ENCODE measurements at regions of chr11 and their contacts with region 1.

Region 1: GRCh38 chr11:95231127-95231880 is at the start of gene SESN3:
- DNase-seq: peak; percentile 96 to 99
- H3K4me3 ChIP-seq: peak within 1 kb of the TSS; percentile 70 to 94
- H3K27ac ChIP-seq: peak within 1 kb of the TSS; percentile 85 to 87
- H3K4me1 ChIP-seq: peaks cover 0 to 14% of the 10 kb centered on the region in 2 donors
- H3K27me3 ChIP-seq: no peaks in the 10 kb centered on the region
- CTCF ChIP-seq: peak in 1 of 3 experiments; percentile 17
- total RNA-seq, gene SESN3: 15.1 TPM

Region 2: GRCh38 chr11:95067039-95067840 is 164.1 kb before region 1 on chr11:
- intact Hi-C with region 1: loop called (anchors 5 kb)
- DNase-seq: peak in 1 of 2 donors; percentile 93
- H3K4me3 ChIP-seq: peak overlapping the region; percentile 88 to 95
- H3K27ac ChIP-seq: peak overlapping the region; percentile 98 to 99
- H3K4me1 ChIP-seq: peaks cover 0 to 14% of the 10 kb centered on the region in 2 donors
- H3K27me3 ChIP-seq: no peaks in the 10 kb centered on the region
- CTCF ChIP-seq: peak; percentile 71 to 78 (median 73)

Region 3: DNA sequence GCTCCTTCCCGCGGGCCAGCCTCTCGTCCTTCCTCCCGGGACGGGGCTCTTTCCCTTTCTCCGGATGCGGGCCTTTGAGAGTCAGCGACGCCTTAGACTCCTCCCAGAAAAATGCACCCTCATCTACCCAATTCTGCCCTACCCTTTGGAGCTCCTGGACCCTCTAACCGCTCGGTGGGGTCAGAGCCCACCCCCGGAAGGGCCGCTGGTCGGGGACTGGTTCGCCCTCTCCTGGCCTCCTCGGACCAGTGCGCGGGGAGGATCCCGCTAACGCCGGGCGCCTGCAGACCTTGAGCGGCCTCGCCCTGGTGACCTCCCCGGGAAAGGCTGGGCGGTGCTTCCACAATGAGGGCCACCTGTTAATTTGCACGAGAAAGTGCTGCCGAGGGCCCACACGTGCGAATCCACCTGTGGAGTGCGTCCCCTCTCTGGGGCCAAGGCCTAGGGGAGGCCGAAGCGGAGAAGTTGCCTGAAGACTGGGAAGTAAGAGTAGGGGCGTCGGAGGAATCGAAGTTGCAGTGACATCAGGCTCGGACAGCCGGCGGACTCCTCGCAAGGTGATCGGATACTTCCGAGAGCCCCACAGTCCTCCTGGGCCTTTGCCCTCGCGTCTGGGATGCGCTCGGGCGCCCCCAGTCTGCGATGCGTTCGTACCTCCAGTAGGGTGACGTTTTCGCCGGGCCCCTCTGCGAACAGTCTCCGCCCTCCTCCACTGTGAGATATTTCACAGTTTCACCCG is 80.2 kb before region 1 on chr11:
- intact Hi-C with region 1: loop called (anchors 2 kb)
- DNase-seq: peak; percentile 60 to 96
- H3K4me3 ChIP-seq: peak overlapping the region; percentile 76 to 88
- H3K27ac ChIP-seq: peak overlapping the region; percentile 89 to 94
- H3K4me1 ChIP-seq: peaks cover 0 to 15% of the 10 kb centered on the region in 2 donors
- H3K27me3 ChIP-seq: no peaks in the 10 kb centered on the region
- CTCF ChIP-seq: peak; percentile 71 to 95 (median 83)

Region 4: DNA sequence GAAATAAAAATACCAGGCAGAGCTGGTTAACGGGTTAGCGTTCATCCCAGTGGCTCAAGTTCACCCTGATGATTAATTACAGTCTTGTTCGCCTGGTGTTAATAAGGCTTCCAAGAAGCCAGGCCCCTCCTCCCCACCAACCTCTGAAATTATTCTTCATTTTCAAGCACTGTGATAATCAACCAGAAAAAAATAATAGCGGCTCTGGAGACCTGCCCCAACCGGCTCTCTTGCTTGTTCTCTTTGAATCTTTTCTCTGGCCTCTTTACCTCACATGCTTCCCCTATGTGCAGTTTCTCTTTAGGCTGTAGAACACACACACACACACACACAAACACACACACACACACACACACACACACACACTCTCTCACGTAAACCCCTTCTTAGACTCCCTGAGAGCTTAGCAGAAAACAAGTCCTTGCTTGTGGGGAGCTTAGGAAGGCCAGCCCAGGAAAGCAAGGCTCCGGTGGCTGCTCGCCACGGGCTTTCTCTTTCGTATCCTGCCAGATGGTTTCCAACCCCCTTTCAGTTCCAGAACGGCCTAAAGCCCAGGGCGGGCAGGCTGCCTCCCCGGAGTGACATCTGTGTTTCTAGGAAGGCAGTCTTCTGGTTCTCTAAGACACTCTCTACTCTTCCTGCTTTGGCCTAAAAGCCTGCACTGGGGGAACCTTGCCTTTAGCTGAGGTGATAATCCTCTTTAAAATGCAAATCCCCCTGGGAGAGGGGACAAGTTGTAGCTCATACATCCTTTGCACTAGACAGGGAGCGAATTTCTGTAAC is 106.1 kb after region 1 on chr11:
- intact Hi-C with region 1: loop called (anchors 5 kb)
- DNase-seq: peak in 1 of 2 donors; percentile 71
- H3K4me3 ChIP-seq: peak overlapping the region in 1 of 2 donors; percentile 46
- H3K27ac ChIP-seq: peak overlapping the region; percentile 77 to 88
- H3K4me1 ChIP-seq: peaks cover 7 to 28% of the 10 kb centered on the region in 2 donors
- H3K27me3 ChIP-seq: no peaks in the 10 kb centered on the region
- CTCF ChIP-seq: no peak

Region 5: DNA sequence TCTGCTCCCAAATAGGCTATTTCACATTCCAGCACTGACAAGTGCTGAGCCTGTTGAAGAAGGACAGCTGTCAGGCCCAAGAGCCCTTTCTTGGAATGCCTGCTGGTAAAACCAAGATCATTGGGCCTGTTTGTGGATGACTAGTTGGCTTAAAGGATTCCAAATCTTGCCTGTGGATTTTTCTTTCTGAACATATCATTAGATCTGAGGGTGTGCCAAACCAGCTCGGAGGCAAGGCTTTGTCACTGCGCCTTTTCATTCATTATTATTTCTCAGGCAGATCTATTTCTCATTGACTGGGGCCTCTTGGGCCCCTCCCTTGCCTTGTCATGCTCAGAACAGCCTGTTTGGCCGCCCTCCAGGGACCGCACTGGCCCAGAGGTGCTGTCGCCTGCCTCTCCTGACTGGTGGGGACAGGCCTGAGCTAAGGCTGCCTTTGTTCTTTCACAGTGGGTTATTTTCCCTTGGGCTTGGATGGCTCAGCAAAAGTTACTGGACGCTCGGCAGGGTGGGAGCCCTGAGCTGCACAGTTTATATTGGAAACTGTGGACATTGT is 222.4 kb after region 1 on chr11:
- intact Hi-C with region 1: loop called (anchors 2 kb)
- DNase-seq: peak in 1 of 2 donors; percentile 79
- H3K4me3 ChIP-seq: no peak overlapping the region
- H3K27ac ChIP-seq: peak overlapping the region; percentile 71 to 74
- H3K4me1 ChIP-seq: peaks cover 0 to 17% of the 10 kb centered on the region in 2 donors
- H3K27me3 ChIP-seq: no peaks in the 10 kb centered on the region
- CTCF ChIP-seq: no peak

Region 6: GRCh38 chr11:95705485-95706124 is 474.3 kb after region 1 on chr11:
- intact Hi-C with region 1: loop called (anchors 1 kb)
- DNase-seq: peak; percentile 51 to 94
- H3K4me3 ChIP-seq: no peak overlapping the region
- H3K27ac ChIP-seq: peak overlapping the region; percentile 60 to 63
- H3K4me1 ChIP-seq: peaks cover 0 to 8% of the 10 kb centered on the region in 2 donors
- H3K27me3 ChIP-seq: no peaks in the 10 kb centered on the region
- CTCF ChIP-seq: peak; percentile 89 to 96 (median 96)

Region 7: GRCh38 chr11:95790123-95790932 is 559.0 kb after region 1 on chr11 and contains the start of gene CEP57:
- intact Hi-C with region 1: loop called (anchors 1 kb)
- DNase-seq: peak; percentile 86 to 99
- H3K4me3 ChIP-seq: peak within 1 kb of the TSS; percentile 95 to 98
- H3K27ac ChIP-seq: peak within 1 kb of the TSS; percentile 91 to 100
- H3K4me1 ChIP-seq: peaks cover 0 to 22% of the 10 kb centered on the region in 2 donors
- H3K27me3 ChIP-seq: no peaks in the 10 kb centered on the region
- CTCF ChIP-seq: no peak
- total RNA-seq, gene CEP57: 5.4 TPM